WTC11 (cell line): ENCODE measurements at regions of chr5 and their contacts with region 1.

Region 1: GRCh38 chr5:151659001-151659754 is 27.5 kb downstream of the SPARC start:
- DNase-seq: peak; percentile 94
- ATAC-seq: peak; percentile 97
- H3K4me3 Mint-ChIP-seq: no peak overlapping the region
- H3K27ac Mint-ChIP-seq: no peak overlapping the region
- H3K4me1 Mint-ChIP-seq: peaks cover 12% of the 10 kb centered on the region
- H3K27me3 Mint-ChIP-seq: no peaks in the 10 kb centered on the region
- CTCF ChIP-seq: peak; percentile 68

Region 2: DNA sequence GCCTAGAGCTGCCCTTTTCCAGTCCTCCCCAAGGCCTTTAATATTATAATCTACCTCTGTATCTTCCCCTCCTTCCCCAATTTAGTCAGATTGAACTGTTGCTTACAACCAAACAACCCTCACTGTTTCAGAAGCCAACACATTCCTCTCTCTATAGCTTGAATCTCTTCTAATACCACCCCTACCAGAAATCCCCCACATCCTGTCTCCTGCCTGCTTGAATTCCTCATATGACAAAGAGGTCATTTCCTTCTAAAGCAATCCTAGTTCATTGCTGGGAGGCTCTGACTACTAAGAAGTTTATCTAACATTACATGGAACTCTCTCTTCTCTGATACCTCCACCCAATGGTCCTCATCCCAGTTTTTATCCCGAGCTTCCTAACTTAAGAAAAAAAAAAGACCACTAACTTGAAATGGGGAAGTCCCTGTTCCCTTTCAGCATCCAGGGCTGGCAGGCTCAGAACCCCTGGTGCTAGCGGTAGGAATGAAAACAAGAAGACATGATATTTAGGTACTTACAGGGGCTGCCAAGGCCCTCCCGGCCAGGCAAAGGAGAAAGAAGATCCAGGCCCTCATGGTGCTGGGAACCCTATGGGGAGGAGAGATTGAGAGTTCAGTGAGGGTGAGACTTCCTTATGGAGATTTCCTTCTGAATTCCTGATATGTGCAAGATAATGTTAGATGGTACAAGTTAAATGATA is 16.6 kb after region 1 on chr5:
- CTCF ChIA-PET with region 1: interaction called, 12 read pairs
- POLR2A ChIA-PET with region 1: interaction called, 3 read pairs
- DNase-seq: no peak
- ATAC-seq: peak; percentile 31
- H3K4me3 Mint-ChIP-seq: no peak overlapping the region
- H3K27ac Mint-ChIP-seq: peak overlapping the region; percentile 90
- H3K4me1 Mint-ChIP-seq: peaks cover 57% of the 10 kb centered on the region
- H3K27me3 Mint-ChIP-seq: no peaks in the 10 kb centered on the region
- CTCF ChIP-seq: no peak

Region 3: DNA sequence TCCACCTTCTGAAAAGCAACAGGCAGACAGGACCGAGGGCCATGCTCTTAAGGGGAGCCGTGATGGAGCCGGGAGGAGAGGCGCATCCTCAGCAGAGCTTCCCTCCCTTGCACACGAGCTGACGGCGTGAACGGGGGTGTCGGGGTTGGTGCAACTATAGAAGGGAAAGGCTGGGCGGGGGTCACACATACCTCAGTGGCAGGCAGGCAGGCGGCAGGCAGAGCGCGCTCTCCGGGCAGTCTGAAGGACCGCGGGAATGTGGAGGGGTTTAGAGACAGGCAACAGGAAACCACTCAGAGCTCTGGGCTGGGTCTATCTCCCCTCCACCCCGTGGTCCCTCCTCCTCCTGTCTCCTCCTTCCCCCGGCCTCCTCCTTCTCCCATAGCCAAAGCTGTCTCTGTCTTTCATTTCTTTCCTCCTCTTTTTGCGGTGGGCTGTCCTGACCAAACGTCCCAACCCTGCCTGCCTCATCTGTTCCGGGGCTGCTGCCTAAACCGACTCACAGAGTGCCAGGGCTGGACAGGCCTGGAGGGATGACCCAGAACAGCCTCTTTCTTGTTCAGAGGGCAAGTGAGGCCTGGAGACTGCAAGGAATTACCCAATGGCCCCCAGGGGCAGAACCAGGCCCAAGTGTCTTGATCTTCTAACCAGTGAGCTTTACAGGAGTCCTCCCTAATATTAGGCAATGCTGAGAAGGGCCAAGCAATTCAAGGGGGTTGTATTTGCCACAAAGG is 27.7 kb after region 1 on chr5 and contains the start of gene SPARC:
- CTCF ChIA-PET with region 1: interaction called, 13 read pairs
- POLR2A ChIA-PET with region 1: interaction called, 3 read pairs
- DNase-seq: peak; percentile 78
- ATAC-seq: peak; percentile 93
- H3K4me3 Mint-ChIP-seq: peak within 1 kb of the TSS; percentile 87
- H3K27ac Mint-ChIP-seq: peak within 1 kb of the TSS; percentile 84
- H3K4me1 Mint-ChIP-seq: peaks cover 41% of the 10 kb centered on the region
- H3K27me3 Mint-ChIP-seq: no peaks in the 10 kb centered on the region
- CTCF ChIP-seq: no peak
- total RNA-seq, gene SPARC: 357 to 418 TPM (median 358 TPM) in 3 replicates

Region 4: GRCh38 chr5:151699071-151699901 is 40.1 kb after region 1 on chr5:
- CTCF ChIA-PET with region 1: interaction called, 26 read pairs
- POLR2A ChIA-PET with region 1: no interaction called
- DNase-seq: no peak
- ATAC-seq: peak; percentile 20
- H3K4me3 Mint-ChIP-seq: no peak overlapping the region
- H3K27ac Mint-ChIP-seq: peak overlapping the region; percentile 19; the same call in 1 of the 2 replicates
- H3K4me1 Mint-ChIP-seq: peaks cover 28% of the 10 kb centered on the region
- H3K27me3 Mint-ChIP-seq: no peaks in the 10 kb centered on the region; the same call in 1 of the 2 replicates
- CTCF ChIP-seq: no peak

Region 5: GRCh38 chr5:151719228-151720000 is 60.2 kb after region 1 on chr5:
- CTCF ChIA-PET with region 1: interaction called, 27 read pairs
- POLR2A ChIA-PET with region 1: no interaction called
- DNase-seq: peak; percentile 43
- ATAC-seq: peak; percentile 79
- H3K4me3 Mint-ChIP-seq: no peak overlapping the region
- H3K27ac Mint-ChIP-seq: no peak overlapping the region
- H3K4me1 Mint-ChIP-seq: peaks cover 15% of the 10 kb centered on the region
- H3K27me3 Mint-ChIP-seq: peaks cover 3% of the 10 kb centered on the region
- CTCF ChIP-seq: peak; percentile 63

Region 6: DNA sequence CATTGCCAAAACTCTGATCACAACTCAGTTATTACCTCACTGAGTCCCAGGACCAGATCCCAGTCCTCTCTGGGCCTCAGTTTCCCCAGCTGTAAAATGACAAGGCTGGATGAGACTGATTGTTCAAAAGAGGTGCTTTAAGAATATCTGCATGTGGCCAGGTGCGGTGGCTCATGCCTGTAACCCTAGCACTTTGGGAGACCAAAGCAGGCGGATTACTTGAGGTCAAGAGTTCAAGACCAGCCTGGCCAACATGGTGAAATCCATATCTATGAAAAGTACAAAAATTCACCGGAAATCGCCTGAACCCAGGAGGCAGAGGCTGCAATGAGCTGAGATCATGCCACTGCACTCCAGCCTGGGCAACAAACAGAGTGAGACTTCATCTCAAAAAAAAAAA is 90.9 kb after region 1 on chr5:
- CTCF ChIA-PET with region 1: interaction called, 10 read pairs
- POLR2A ChIA-PET with region 1: interaction called, 3 read pairs
- DNase-seq: no peak
- ATAC-seq: no peak
- H3K4me3 Mint-ChIP-seq: no peak overlapping the region
- H3K27ac Mint-ChIP-seq: no peak overlapping the region
- H3K4me1 Mint-ChIP-seq: peaks cover 3% of the 10 kb centered on the region
- H3K27me3 Mint-ChIP-seq: no peaks in the 10 kb centered on the region
- CTCF ChIP-seq: no peak

Region 7: GRCh38 chr5:151771259-151772028 is 112.3 kb after region 1 on chr5 and contains the start of gene G3BP1:
- CTCF ChIA-PET with region 1: interaction called, 11 read pairs
- POLR2A ChIA-PET with region 1: no interaction called
- DNase-seq: peak; percentile 100
- ATAC-seq: peak; percentile 86
- H3K4me3 Mint-ChIP-seq: peak within 1 kb of the TSS; percentile 94
- H3K27ac Mint-ChIP-seq: peak within 1 kb of the TSS; percentile 17
- H3K4me1 Mint-ChIP-seq: peaks cover 38% of the 10 kb centered on the region
- H3K27me3 Mint-ChIP-seq: no peaks in the 10 kb centered on the region
- CTCF ChIP-seq: no peak
- total RNA-seq, gene G3BP1: 396 to 413 TPM (median 400 TPM) in 3 replicates

Region 8: DNA sequence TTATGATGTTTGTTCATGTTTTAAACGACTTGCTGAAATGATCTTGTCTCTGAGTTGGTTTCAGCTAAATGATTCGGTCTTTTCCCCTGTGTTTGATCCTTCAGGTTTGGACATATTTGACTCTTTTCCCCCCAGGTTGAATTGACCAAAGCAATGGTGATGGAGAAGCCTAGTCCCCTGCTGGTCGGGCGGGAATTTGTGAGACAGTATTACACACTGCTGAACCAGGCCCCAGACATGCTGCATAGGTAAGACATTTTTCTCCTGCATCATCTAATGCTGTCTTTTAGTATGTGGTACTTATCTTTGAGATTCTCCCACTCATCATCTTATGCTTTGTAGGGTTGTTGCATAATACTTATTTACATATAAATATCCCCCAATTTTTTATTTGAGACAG is 127.3 kb after region 1 on chr5:
- CTCF ChIA-PET with region 1: no interaction called
- POLR2A ChIA-PET with region 1: no interaction called
- DNase-seq: no peak
- ATAC-seq: peak; percentile 30; the same call in 1 of the 2 replicates
- H3K4me3 Mint-ChIP-seq: no peak overlapping the region
- H3K27ac Mint-ChIP-seq: peak overlapping the region; percentile 81
- H3K4me1 Mint-ChIP-seq: peaks cover 44% of the 10 kb centered on the region
- H3K27me3 Mint-ChIP-seq: no peaks in the 10 kb centered on the region
- CTCF ChIP-seq: no peak